AG04450 (cell line): ENCODE measurements at regions of chr11 and their contacts with region 1.

Region 1: DNA sequence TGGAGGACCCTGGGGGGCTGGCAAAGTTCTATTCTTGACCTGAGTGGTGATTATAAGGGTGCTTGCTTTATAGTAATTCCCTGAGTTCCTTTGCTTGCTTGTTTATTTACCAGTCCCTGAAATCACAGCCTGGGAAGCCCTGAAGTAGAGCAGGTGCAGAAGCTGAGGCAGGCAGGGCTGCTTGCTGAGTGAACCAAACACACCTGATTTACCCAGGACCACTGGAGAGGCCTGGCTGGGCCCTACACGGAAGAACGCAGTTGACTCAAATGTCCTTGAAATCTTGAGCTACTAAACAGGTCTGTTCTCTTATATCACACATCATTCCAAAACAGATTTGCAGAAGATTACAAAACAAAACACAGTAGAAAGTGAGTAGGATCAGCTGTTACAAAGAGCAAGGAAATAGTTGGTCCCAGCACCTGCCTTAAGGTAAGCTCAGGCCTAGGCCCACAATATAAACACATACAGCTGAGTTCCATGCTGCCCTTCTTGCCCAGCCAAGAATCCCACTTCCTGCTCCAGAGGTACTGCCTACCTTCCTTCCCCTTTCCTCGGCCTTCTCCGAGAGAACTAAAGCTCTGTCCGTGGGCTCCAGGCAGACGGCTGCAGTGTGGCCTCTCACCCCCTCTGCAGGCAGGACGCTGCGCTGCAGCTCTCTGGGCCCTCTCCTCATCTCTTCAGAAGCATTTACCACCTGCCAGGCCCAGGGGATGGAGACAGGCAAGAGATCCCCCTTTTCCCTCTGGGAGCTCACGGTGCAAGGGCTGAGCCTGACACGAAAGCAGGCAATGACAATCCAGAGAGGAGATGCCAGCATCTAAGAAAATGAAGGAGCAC is 46.1 kb upstream of the SCUBE2 start:
- DNase-seq: peak; percentile 41
- H3K4me3 ChIP-seq: no peak overlapping the region
- H3K27ac ChIP-seq: no peak overlapping the region
- H3K27me3 ChIP-seq: no peaks in the 10 kb centered on the region
- CTCF ChIP-seq: peak; percentile 99

Region 2: GRCh38 chr11:8911029-8911826 is 226.3 kb before region 1 on chr11 and contains the start of gene AKIP1:
- CTCF ChIA-PET with region 1: interaction called, 27 read pairs
- POLR2A ChIA-PET with region 1: no interaction called
- DNase-seq: peak; percentile 87
- H3K4me3 ChIP-seq: peak within 1 kb of the TSS; percentile 89
- H3K27ac ChIP-seq: peak within 1 kb of the TSS; percentile 83
- H3K27me3 ChIP-seq: no peaks in the 10 kb centered on the region
- CTCF ChIP-seq: no peak
- polyA plus RNA-seq, gene AKIP1: 39.6 and 41.4 TPM in 2 replicates

Region 3: DNA sequence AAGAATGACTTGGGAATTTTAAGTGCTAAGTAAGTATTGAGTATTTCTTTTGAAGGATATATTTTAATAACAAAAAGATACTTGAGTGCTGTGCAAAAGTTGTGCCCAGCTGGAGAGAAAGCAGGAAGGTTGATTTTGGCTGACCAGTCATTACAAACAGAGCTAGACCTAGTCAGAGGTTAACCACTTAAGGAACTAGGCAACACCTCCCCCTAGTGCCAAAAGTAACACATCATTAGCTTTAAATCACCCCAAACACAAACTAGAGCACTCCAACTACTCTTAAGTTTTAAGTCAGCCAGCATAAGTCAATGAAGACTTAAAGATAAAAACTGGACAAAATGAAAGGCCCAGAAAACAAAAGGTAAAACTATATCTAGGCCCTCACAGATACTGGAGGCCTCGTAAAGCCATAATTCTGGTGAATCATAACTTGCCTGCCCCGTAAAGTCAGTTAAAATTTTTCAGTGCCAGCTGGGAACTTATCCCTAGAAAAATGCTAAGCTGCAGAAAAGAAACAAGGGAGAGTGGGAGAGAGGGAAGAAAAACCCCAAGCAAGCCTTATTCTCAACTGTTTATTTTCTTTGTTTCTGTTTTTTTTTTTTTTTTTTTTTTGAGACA is 177.9 kb before region 1 on chr11:
- CTCF ChIA-PET with region 1: interaction called, 20 read pairs
- POLR2A ChIA-PET with region 1: interaction called, 7 read pairs
- DNase-seq: peak; percentile 68
- H3K4me3 ChIP-seq: no peak overlapping the region
- H3K27ac ChIP-seq: peak overlapping the region; percentile 39
- H3K27me3 ChIP-seq: no peaks in the 10 kb centered on the region
- CTCF ChIP-seq: peak; percentile 62

Region 4: DNA sequence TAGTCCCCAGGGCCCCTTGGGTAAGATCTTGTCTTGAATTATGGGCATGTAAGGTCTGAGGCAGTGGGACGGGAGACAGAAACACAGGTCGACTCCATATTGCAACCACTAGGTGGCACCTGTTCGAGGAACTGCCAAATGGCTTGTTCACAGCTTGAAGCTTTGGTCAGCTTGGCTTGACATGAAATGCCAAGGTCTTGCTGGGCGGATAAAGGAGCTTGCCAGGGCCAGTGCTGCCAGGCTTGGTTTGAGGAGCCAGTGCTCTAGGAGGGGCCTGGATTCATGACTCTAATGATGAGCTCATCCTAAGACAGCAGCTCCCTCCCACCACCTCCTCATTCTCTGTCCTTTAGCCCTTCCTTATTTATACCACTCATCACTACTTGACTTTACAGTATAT is 121.8 kb before region 1 on chr11:
- CTCF ChIA-PET with region 1: interaction called, 123 read pairs
- POLR2A ChIA-PET with region 1: interaction called, 8 read pairs
- DNase-seq: peak; percentile 53
- H3K4me3 ChIP-seq: no peak overlapping the region
- H3K27ac ChIP-seq: no peak overlapping the region
- H3K27me3 ChIP-seq: no peaks in the 10 kb centered on the region
- CTCF ChIP-seq: peak; percentile 81

Region 5: DNA sequence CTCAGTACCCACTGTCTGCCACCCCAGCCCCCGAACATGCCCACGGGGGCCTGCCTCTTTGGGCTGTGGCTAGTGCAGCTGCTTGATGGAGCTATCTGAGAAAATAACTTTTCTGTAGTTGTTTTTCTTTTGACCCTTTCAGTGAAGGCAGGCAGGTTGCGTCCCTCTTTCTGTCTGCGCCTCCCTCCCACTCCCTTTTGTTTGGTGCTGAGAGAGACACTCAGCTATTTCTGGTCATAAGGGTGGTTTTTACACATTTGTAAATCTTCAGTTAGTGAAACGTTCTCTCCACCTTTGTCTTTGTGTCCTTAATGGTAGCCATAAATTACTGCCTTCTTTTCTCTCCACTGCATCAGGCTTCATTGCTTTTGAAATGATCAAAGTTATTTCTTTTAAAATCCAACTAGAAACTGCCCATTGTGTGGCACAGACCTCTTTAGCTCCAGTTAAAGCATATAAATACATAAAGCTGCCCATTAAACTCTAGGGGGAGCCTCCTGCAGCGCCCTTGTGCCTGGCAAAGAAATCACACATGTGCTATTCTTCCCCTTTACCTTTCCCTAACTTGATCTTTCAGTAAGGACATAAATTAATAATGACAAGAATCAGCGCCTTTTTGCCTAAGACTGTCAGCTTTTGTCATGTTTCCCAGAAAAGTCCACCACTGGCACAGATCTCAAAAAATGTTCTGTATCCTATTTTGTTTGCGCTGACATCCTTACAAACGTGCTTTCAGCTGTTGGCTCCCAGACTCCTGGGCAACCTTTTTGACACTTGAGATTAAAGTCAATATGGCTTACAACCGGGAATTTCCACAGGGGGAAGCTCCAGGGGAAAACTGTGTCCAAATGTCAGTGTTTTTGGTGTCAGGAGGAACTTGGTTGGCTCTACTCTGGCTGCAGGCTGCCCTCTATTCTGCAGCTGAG is 44.4 kb before region 1 on chr11:
- CTCF ChIA-PET with region 1: interaction called, 13 read pairs
- POLR2A ChIA-PET with region 1: no interaction called
- DNase-seq: no peak
- H3K4me3 ChIP-seq: no peak overlapping the region
- H3K27ac ChIP-seq: no peak overlapping the region
- H3K27me3 ChIP-seq: peaks cover 11% of the 10 kb centered on the region
- CTCF ChIP-seq: peak; percentile 45

Region 6: GRCh38 chr11:9109939-9110731 is 27.4 kb before region 1 on chr11:
- CTCF ChIA-PET with region 1: interaction called, 13 read pairs
- POLR2A ChIA-PET with region 1: no interaction called
- DNase-seq: no peak
- H3K4me3 ChIP-seq: no peak overlapping the region
- H3K27ac ChIP-seq: no peak overlapping the region
- H3K27me3 ChIP-seq: no peaks in the 10 kb centered on the region
- CTCF ChIP-seq: no peak

Region 7: DNA sequence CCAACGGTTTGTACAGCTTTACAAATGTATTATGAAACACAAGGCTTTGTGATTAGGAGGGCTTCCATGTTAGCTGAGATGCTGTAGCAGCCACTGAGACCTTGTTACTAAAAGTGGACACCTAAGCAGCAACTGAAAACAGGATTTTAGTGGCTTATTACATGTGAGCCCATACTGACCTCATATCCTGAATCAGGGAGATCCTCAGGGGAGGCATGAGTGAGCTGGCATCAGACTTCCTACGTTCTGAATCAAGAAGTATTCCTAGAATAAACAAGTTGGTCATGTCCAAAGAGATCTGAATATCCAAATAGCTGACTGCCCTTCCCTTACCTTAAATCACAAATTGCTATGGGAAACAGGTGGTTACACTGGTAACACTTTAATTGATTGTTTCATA is 13.0 kb after region 1 on chr11:
- CTCF ChIA-PET with region 1: interaction called, 22 read pairs
- POLR2A ChIA-PET with region 1: no interaction called
- DNase-seq: peak; percentile 53
- H3K4me3 ChIP-seq: no peak overlapping the region
- H3K27ac ChIP-seq: peak overlapping the region; percentile 58
- H3K27me3 ChIP-seq: no peaks in the 10 kb centered on the region
- CTCF ChIP-seq: no peak